Endothelial cell of umbilical vein (primary cell): ENCODE measurements at regions of chr9 and their contacts with region 1.

Region 1: GRCh38 chr9:38088006-38088925 is 19.2 kb upstream of the SHB start:
- DNase-seq: peak; percentile 70
- H3K4me3 ChIP-seq: no peak overlapping the region
- H3K27ac ChIP-seq: no peak overlapping the region
- H3K4me1 ChIP-seq: peaks cover 11% of the 10 kb centered on the region
- H3K27me3 ChIP-seq: no peaks in the 10 kb centered on the region
- CTCF ChIP-seq: peak; percentile 96 to 98
- POLR2A ChIP-seq: no peak

Region 2: GRCh38 chr9:37639109-37639762 is 449.0 kb before region 1 on chr9:
- CTCF ChIA-PET with region 1: no interaction called
- POLR2A ChIA-PET with region 1: no interaction called
- dilution Hi-C with region 1: no loop called
- intact Hi-C with region 1: no loop called
- DNase-seq: no peak
- H3K4me3 ChIP-seq: no peak overlapping the region
- H3K27ac ChIP-seq: no peak overlapping the region
- H3K4me1 ChIP-seq: no peaks in the 10 kb centered on the region
- H3K27me3 ChIP-seq: peaks cover 11 to 26% of the 10 kb centered on the region in 2 experiments
- CTCF ChIP-seq: no peak
- POLR2A ChIP-seq: no peak

Region 3: DNA sequence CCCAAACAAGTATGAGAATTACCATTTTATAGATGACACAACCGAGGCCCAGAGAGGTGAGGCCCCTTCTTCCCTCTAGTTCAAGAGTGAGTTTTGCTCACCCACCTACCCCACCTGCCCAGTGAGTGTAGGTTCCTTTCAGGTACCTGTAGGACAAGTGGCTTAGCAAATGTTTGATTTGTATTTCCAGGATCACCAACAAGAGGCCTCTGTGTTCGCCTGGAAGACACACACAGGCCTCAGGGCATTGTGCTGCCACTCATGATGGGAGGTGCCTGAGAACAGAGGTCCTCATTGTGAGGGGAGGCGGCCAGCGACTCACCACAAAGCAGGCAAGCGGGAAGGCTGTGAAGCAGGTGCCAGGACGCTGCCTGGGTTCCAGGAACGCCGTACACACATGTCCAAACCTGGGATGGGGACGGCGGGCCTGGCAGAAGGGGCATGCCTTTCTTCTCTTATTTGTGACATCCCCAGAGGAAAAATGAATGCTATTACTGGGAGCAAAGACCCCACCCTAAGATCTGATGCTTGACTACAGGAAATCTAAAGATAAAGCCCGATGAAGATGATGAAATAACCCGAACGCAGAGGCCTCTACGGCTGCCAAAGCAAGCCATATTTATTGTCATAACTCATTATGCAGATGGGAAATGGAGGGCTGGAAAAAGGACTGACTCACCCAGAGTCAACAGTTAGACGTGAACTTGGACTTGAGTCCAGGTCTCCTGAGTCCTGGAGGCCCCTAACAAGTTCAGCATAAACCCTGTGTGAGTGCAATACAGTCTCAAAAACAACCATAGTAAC is 124.1 kb before region 1 on chr9:
- CTCF ChIA-PET with region 1: interaction called, 13 read pairs
- POLR2A ChIA-PET with region 1: no interaction called
- dilution Hi-C with region 1: no loop called
- intact Hi-C with region 1: no loop called
- DNase-seq: peak; percentile 94
- H3K4me3 ChIP-seq: no peak overlapping the region
- H3K27ac ChIP-seq: peak overlapping the region; percentile 67
- H3K4me1 ChIP-seq: peaks cover 41% of the 10 kb centered on the region
- H3K27me3 ChIP-seq: no peaks in the 10 kb centered on the region
- CTCF ChIP-seq: no peak
- POLR2A ChIP-seq: no peak

Region 4: DNA sequence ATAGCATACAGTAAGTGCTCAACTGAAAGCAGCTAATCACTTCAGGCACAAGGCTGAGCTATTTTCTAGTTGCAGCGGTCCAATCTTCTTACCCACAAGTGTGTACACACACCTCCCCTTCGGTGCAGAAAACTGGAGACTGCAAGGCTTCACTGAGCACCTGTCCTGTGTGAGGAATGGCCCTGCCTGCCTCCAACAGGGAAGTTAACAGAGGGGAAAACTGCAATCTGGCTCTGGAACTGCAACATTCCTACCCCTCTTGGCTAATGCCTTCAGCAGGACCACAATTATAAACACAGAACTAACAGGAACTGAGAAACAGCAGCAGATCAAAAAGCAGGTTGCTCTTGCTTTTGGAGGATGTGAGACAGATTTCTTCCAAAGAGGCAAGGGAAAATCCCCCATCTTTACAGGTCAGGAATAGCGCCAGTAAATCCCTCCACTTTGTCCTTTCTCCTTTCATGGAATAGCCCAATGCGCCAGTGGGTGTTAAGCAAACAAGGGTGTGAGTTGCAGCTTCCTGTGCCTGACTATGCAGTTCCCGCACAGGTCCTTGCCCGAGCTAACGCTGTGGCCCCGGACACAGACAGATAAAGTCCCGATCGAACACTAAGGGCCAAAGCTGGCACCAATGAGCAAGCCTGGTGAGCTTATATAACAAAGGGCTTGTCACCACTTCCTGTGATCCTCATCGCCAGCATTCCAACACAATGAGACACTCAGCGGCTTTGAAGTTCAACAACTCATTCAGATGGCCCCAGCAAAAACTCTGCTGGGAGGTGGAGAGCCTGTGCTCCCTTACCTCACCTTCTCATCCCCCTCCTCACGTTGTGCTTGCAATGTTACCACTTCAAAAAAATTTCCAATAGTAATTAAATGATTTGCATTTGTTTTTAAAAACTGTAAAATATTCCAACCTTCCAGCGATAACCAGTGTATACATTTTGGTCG is 40.7 kb before region 1 on chr9:
- CTCF ChIA-PET with region 1: interaction called, 12 read pairs
- POLR2A ChIA-PET with region 1: no interaction called
- dilution Hi-C with region 1: no loop called
- intact Hi-C with region 1: no loop called
- DNase-seq: peak; percentile 90
- H3K4me3 ChIP-seq: peak overlapping the region in 1 of 3 experiments; percentile 38
- H3K27ac ChIP-seq: peak overlapping the region; percentile 96
- H3K4me1 ChIP-seq: peaks cover 30% of the 10 kb centered on the region
- H3K27me3 ChIP-seq: no peaks in the 10 kb centered on the region
- CTCF ChIP-seq: no peak
- POLR2A ChIP-seq: peak; percentile 34

Region 5: DNA sequence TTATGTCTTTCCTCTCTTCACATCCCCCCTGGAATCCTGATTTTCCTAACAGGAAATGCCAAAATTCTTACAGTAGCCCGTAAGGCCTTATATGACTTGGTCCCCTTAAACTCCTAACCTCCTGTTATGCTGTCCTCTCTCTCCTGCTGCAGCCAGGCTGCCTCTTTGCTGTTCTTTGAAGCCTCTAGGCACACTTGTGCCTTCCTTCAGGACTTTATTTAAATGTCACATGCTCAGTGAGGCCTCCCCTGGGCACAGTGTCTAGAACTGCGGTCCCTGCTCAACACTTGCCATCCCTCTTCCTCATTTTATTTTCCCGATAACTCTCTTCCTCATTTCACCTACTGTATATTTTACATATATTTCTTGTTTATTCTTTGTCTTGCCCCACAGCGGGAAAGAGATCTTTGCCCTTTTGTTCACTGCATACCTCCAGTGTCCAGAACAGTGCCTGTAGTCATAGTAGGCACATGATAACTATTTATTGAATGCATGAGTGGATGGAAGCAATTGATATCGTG is 13.8 kb before region 1 on chr9:
- CTCF ChIA-PET with region 1: interaction called, 45 read pairs
- POLR2A ChIA-PET with region 1: no interaction called
- dilution Hi-C with region 1: no loop called
- intact Hi-C with region 1: no loop called
- DNase-seq: peak; percentile 40
- H3K4me3 ChIP-seq: no peak overlapping the region
- H3K27ac ChIP-seq: peak overlapping the region; percentile 52
- H3K4me1 ChIP-seq: peaks cover 33% of the 10 kb centered on the region
- H3K27me3 ChIP-seq: no peaks in the 10 kb centered on the region
- CTCF ChIP-seq: no peak
- POLR2A ChIP-seq: no peak

Region 6: GRCh38 chr9:38263532-38263931 is 175.3 kb after region 1 on chr9:
- CTCF ChIA-PET with region 1: interaction called, 14 read pairs
- POLR2A ChIA-PET with region 1: no interaction called
- dilution Hi-C with region 1: no loop called
- intact Hi-C with region 1: loop called (anchors 1 kb)
- DNase-seq: peak; percentile 53
- H3K4me3 ChIP-seq: no peak overlapping the region
- H3K27ac ChIP-seq: no peak overlapping the region
- H3K4me1 ChIP-seq: no peaks in the 10 kb centered on the region
- H3K27me3 ChIP-seq: peaks cover 6 to 13% of the 10 kb centered on the region in 2 experiments
- CTCF ChIP-seq: peak in 1 of 2 donors; percentile 35
- POLR2A ChIP-seq: no peak